Endothelial cell of umbilical vein (primary cell): ENCODE measurements at regions of chr3 and their contacts with region 1.

Region 1: DNA sequence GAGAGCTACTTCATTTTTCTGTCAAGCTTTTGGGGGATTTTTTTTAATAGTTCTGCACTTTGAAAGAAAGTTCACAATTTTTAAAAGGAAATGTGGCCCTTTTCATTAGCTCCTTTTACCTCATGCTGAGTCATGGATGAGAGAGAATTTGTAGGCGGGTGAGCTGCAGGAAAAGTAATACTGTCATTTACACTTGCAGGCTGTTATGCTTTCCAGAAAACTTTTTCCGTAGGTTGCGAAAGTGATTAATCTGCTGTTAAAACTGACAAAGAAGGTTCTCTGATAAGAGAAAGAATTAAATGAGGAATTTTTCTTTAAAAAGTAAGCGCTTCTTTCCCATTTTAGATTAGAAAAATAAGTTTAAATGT is 430.2 kb downstream of the LPP start:
- DNase-seq: peak; percentile 78
- H3K4me3 ChIP-seq: peak overlapping the region in 2 of 3 experiments; percentile 15 to 41
- H3K27ac ChIP-seq: peak overlapping the region; percentile 79
- H3K4me1 ChIP-seq: peaks cover 20% of the 10 kb centered on the region
- H3K27me3 ChIP-seq: no peaks in the 10 kb centered on the region
- CTCF ChIP-seq: no peak
- POLR2A ChIP-seq: no peak

Region 2: GRCh38 chr3:188546835-188547670 is 37.1 kb before region 1 on chr3:
- CTCF ChIA-PET with region 1: no interaction called
- POLR2A ChIA-PET with region 1: no interaction called
- dilution Hi-C with region 1: no loop called
- intact Hi-C with region 1: loop called (anchors 2 kb)
- DNase-seq: peak; percentile 87
- H3K4me3 ChIP-seq: peak overlapping the region in 1 of 3 experiments; percentile 22
- H3K27ac ChIP-seq: peak overlapping the region; percentile 86
- H3K4me1 ChIP-seq: peaks cover 34% of the 10 kb centered on the region
- H3K27me3 ChIP-seq: no peaks in the 10 kb centered on the region
- CTCF ChIP-seq: no peak
- POLR2A ChIP-seq: no peak